ENCODE measurements at regions of chr6 and their contacts with region 1.

Region 1: GRCh38 chr6:166400181-166400580 is 17.4 kb upstream of the MPC1 start:
- DNase-seq: no peak

Region 2: GRCh38 chr6:166313255-166314070 is 86.7 kb before region 1 on chr6:
- CTCF ChIA-PET with region 1: interaction called, 14 read pairs
- POLR2A ChIA-PET with region 1: no interaction called
- DNase-seq: peak; percentile 68

Region 3: DNA sequence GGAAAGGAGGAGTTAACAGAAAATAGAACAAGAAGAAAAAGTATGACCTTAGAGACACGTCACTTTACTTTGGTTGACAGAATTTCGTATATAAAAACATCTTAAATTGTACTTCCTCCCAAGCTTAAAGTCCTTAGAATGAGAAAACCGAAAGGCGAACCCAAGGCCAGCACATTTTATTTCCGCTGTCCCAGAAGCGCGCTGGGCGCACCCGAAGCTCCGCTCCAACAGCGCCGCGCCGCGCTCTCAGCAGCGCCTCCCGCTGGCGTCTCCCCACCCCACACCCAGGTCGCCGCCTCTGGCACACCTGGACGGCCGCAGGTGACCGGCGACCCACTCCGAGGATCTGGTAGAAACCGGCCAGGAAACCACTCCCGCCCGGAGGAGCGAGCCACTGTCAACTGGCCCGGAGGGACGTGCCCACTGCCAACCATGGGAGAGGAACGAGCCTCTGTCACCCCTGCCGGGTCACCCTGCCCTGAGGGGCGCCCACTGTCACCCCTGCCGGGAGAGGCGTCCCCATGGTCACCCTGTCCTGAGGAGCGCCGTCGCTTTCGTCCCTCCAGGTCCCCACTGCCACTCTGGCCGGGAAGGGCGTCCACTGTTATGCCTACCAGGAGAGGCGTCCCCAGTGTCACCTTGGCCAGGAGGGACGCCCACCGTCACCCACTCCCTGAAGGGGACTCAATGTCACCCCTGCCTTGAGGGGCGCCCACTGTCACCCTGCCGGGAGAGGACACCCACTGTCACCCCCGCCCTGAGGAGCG is 18.3 kb before region 1 on chr6:
- CTCF ChIA-PET with region 1: interaction called, 20 read pairs
- POLR2A ChIA-PET with region 1: no interaction called
- DNase-seq: peak; percentile 80

Measured in HEK293T (cell line).